ENCODE measurements at regions of chr3 and their contacts with region 1.

Region 1: GRCh38 chr3:172595641-172596393 is 72.6 kb upstream of the TNFSF10 start:
- DNase-seq: peak; percentile 42
- H3K4me3 Mint-ChIP-seq: peak overlapping the region; percentile 84
- H3K27ac Mint-ChIP-seq: peak overlapping the region; percentile 88
- H3K4me1 Mint-ChIP-seq: peaks cover 69% of the 10 kb centered on the region
- H3K27me3 Mint-ChIP-seq: peaks cover 4% of the 10 kb centered on the region

Region 2: GRCh38 chr3:172332256-172333041 is 263.4 kb before region 1 on chr3:
- intact Hi-C with region 1: loop called (anchors 1 kb)
- DNase-seq: peak; percentile 43
- H3K4me3 Mint-ChIP-seq: no peak overlapping the region
- H3K27ac Mint-ChIP-seq: no peak overlapping the region
- H3K4me1 Mint-ChIP-seq: no peaks in the 10 kb centered on the region
- H3K27me3 Mint-ChIP-seq: no peaks in the 10 kb centered on the region

Region 3: DNA sequence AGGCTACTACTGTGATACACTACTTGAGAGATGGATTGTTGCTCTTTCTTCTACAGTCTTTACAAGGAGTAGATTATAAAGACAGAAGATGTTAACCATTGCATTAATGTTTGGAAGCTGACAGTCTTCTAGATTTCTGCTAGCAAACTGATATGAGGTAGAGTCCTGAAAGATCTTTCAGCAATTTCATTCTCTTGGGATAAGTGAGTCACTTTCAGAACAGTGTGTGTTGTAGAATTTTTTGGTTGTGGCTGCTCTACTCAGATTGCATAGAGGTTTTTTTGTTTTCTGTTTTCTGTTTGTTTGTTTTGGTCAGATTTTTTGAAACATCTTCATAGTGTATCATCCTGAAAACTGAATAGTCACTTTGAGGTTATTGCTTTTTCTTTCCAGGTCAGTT is 89.7 kb before region 1 on chr3:
- intact Hi-C with region 1: loop called (anchors 1 kb)
- DNase-seq: no peak
- H3K4me3 Mint-ChIP-seq: peak overlapping the region; percentile 16
- H3K27ac Mint-ChIP-seq: peak overlapping the region; percentile 83
- H3K4me1 Mint-ChIP-seq: peaks cover 57% of the 10 kb centered on the region
- H3K27me3 Mint-ChIP-seq: no peaks in the 10 kb centered on the region

Region 4: DNA sequence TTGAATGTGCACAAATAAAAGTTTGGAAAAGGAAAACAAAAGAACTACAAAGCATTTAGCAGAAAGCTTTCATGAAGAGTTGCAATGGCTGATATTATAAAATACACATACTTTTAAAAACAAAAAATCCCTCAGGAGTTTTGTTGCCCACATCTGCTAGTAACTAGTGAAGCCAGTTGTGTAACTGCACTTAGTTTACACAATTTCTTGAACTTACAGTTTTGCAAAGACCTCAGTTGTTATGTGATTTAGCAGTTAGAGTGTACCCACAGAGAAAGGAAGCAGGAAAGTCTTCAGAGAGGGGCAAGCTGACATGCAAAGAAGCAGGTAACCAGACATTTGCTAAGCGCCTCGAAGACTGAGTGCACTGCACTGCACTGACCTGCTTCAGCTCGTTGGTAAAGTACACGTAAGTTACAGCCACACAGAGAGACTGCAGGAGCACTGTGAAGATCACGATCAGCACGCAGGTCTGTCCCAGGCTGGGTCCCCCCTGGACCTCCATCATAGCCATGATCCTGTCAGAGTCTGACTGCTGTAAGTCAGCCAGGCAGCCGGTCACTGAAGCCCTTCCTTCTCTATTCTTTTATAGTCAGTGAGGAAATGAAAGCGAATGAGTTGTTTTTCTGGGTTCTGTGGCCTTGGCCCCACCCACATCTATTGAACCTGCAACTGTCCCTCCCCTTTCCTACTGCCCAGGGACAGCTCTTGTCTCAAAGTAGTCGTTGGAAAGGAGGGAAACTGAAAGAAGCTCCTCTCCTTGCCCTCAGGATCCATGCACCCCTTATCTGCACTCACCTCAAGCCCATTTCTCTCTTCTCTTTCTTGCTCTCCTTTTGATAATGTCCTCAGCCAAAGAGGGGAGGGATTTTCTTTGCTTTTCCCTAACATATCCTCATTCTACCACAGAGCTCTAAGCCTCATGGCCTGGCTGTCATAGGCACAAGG is 72.7 kb before region 1 on chr3 and contains the start of gene TNFSF10:
- intact Hi-C with region 1: loop called (anchors 1 kb)
- DNase-seq: peak; percentile 79
- H3K4me3 Mint-ChIP-seq: peak within 1 kb of the TSS; percentile 88
- H3K27ac Mint-ChIP-seq: peak within 1 kb of the TSS; percentile 91
- H3K4me1 Mint-ChIP-seq: peaks cover 59% of the 10 kb centered on the region
- H3K27me3 Mint-ChIP-seq: no peaks in the 10 kb centered on the region
- total RNA-seq, gene TNFSF10: 119 and 123 TPM in 2 replicates

Region 5: DNA sequence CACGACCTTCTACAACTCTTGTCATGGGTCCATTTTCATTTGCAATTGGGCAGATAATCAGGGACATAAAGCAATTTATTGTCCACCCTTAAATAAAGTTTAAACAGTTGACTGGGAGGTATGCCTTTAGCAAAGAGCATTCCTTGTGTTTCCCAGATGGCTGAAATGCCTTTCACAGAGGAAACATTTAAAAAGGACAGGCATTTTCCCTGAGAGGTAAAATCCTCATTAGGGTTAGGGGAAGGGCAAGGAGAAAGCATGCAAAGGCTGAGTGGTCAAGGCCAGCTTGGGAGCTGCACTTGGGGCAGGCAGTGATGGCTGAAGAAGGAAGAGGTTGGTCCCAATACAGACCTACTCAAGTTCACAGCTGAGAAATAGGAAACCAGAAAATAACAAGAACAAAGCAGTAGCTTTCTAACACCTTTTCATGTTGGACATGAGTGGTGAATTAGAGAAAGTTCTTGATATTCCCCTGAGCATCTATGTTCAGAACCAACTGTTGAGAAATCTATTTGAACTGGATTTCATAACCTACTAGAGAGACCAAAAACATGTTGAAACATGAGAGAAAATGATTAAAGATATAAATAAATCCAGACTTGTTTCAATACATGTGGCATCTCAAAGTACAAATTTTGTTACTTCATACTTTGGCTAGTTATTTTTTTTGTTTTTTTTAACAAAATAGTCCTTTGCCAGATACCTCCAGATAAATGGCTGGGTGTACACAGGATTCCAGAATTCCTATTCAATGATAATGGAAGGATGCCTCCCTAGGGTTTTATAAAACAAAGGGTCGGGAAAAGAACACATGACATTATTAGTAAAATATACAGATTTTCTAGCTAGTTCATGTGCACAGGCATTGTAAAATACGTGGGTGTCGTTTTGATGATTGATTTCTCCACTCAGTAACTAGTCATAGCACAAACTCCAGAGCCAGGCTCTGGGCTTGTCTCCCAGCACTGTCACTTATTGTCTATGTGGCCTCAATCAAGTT is 38.3 kb before region 1 on chr3:
- intact Hi-C with region 1: loop called (anchors 1 kb)
- DNase-seq: no peak
- H3K4me3 Mint-ChIP-seq: peak overlapping the region; percentile 26
- H3K27ac Mint-ChIP-seq: peak overlapping the region; percentile 68
- H3K4me1 Mint-ChIP-seq: peaks cover 62% of the 10 kb centered on the region
- H3K27me3 Mint-ChIP-seq: no peaks in the 10 kb centered on the region

Region 6: DNA sequence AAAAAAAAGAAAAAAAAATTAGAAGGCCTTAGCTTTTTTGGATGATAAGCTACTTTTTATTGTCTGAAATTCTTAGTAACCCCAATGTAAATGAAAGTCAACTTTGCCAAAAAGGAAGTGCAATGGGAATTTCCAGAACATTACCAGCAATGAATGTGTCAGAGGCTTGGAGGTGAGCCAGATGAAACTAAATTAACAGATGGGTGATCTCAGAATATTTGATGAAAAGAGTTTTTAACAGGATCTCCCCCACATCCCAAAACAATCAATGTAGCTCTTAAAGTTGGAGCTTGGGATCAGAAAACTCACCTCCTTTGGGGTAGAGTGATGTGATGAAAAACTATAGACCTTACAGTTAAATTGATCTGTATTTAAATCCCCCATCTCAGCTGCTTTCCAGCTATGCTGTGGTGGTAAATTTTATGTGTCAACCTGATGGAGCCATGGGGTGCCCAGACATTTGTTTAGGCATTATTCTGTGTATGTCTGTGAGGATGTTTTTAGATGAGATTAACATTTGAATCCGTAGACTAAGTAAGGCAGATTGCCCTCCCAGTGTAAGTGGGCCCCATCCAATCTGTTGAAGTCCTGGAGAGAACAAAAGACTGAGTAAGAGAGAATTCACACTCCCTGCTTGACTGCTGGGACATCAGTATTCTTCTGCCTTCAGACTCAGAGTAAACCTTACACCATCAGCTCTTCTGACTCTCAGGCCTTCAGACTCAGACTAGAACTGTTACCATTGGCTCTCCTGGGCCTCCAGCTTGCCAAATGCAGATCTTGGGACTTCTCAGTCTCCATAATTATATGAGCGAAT is 11.7 kb after region 1 on chr3:
- intact Hi-C with region 1: loop called (anchors 1 kb)
- DNase-seq: no peak
- H3K4me3 Mint-ChIP-seq: no peak overlapping the region
- H3K27ac Mint-ChIP-seq: peak overlapping the region; percentile 67
- H3K4me1 Mint-ChIP-seq: peaks cover 22% of the 10 kb centered on the region
- H3K27me3 Mint-ChIP-seq: no peaks in the 10 kb centered on the region

Region 7: DNA sequence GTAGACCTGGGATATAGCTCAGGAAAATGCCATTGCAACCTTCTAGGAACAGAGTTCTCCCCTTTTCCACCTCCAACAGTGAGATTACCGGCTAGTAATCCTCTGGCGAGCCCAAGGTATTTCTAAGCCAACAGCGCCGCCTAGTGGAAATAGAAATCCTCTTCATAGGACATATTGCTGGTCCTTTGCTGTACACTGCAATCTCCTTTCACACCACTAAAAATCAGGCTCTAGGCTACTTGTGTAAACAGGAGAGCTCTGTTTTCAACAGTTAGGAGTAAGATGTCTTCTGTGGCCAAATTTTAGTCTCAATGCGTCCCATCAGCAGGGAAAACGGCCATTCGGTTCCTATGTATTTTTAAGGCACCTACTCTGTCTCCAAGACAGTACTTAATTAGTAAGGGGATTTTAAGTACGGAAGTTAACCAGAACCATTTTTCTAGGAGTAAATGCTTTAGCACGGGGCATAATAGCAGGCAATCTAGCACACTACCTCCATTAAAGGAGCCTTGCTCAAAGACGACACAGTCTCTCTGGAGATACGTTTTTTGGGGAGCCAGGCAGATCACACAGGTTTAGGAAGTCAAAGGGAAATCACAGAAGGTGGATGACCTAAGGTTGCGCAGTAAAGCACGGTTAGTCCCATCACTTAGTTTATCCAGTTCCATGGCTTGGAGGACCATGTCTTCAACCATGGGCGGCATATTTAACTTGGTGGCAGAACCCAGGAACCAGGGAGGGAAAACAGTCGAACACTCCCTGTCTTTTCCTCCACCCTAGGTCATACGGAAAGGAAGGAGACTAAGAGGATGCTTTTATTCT is 71.3 kb after region 1 on chr3:
- intact Hi-C with region 1: loop called (anchors 1 kb)
- DNase-seq: peak; percentile 70
- H3K4me3 Mint-ChIP-seq: peak overlapping the region; percentile 43
- H3K27ac Mint-ChIP-seq: no peak overlapping the region
- H3K4me1 Mint-ChIP-seq: peaks cover 20% of the 10 kb centered on the region
- H3K27me3 Mint-ChIP-seq: no peaks in the 10 kb centered on the region

Measured in activated T-helper 1 cell treated with anti-CD3 and anti-CD28 coated beads, Interleukin-12 subunit alpha, Interleukin-12 subunit beta, Interleukin-2, Interleukin-4 antibody, amounts not matched to agents 30 ng/mL and 10 ng/mL and 1 ng/mL, durations not matched to agents 14 hours and 24 hours and 36 hours (primary cell).